CD8-positive, alpha-beta T cell (primary cell): ENCODE measurements at regions of chr12 and their contacts with region 1.

Region 1: GRCh38 chr12:112937741-112938719 is at the start of gene OAS3:
- DNase-seq: peak; percentile 20 to 92 (median 62)
- ATAC-seq: peak; percentile 67
- H3K4me3 ChIP-seq: peak within 1 kb of the TSS; percentile 68 to 81
- H3K4me3 Mint-ChIP-seq: peak within 1 kb of the TSS; percentile 87
- H3K27ac ChIP-seq: peak within 1 kb of the TSS; percentile 69 to 78
- H3K27ac Mint-ChIP-seq: peak within 1 kb of the TSS; percentile 89
- H3K4me1 ChIP-seq: peaks cover 20% of the 10 kb centered on the region
- H3K4me1 Mint-ChIP-seq: peaks cover 30% of the 10 kb centered on the region
- H3K27me3 ChIP-seq: no peaks in the 10 kb centered on the region
- H3K27me3 Mint-ChIP-seq: no peaks in the 10 kb centered on the region
- CTCF ChIP-seq: no peak
- total RNA-seq, gene OAS3: 7.7 to 8.2 TPM

Region 2: DNA sequence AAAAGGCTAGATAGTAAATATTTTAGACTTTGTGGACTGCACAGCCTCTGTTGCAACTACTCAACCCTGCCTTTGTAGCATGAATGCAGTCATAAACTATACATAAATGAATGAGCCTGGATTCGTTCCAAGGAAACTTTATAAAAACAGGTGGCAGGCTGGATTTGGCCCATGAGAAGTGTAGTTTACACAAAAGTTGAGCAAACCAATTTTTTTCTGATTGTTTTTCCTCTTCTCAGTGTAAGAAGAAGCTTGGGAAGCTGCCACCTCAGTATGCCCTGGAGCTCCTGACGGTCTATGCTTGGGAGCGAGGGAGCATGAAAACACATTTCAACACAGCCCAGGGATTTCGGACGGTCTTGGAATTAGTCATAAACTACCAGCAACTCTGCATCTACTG is 21.8 kb before region 1 on chr12:
- CTCF ChIA-PET with region 1: no interaction called
- POLR2A ChIA-PET with region 1: no interaction called
- intact Hi-C with region 1: no loop called
- DNase-seq: no peak
- ATAC-seq: no peak
- H3K4me3 ChIP-seq: no peak overlapping the region
- H3K4me3 Mint-ChIP-seq: no peak overlapping the region
- H3K27ac ChIP-seq: no peak overlapping the region
- H3K27ac Mint-ChIP-seq: no peak overlapping the region
- H3K4me1 ChIP-seq: no peaks in the 10 kb centered on the region
- H3K4me1 Mint-ChIP-seq: peaks cover 6% of the 10 kb centered on the region
- H3K27me3 ChIP-seq: no peaks in the 10 kb centered on the region
- H3K27me3 Mint-ChIP-seq: no peaks in the 10 kb centered on the region
- CTCF ChIP-seq: no peak

Region 3: GRCh38 chr12:112998987-112999767 is 61.1 kb after region 1 on chr12:
- CTCF ChIA-PET with region 1: no interaction called
- POLR2A ChIA-PET with region 1: no interaction called
- intact Hi-C with region 1: loop called in 1 of 2 experiments (anchors 5 kb)
- DNase-seq: no peak
- ATAC-seq: no peak
- H3K4me3 ChIP-seq: no peak overlapping the region
- H3K4me3 Mint-ChIP-seq: no peak overlapping the region
- H3K27ac ChIP-seq: no peak overlapping the region
- H3K27ac Mint-ChIP-seq: peak overlapping the region; percentile 49
- H3K4me1 ChIP-seq: no peaks in the 10 kb centered on the region
- H3K4me1 Mint-ChIP-seq: no peaks in the 10 kb centered on the region
- H3K27me3 ChIP-seq: no peaks in the 10 kb centered on the region
- H3K27me3 Mint-ChIP-seq: no peaks in the 10 kb centered on the region
- CTCF ChIP-seq: no peak

Region 4: GRCh38 chr12:113658006-113658655 is 720.1 kb after region 1 on chr12:
- CTCF ChIA-PET with region 1: no interaction called
- POLR2A ChIA-PET with region 1: no interaction called
- intact Hi-C with region 1: no loop called
- DNase-seq: no peak
- ATAC-seq: no peak
- H3K4me3 ChIP-seq: no peak overlapping the region
- H3K4me3 Mint-ChIP-seq: no peak overlapping the region
- H3K27ac ChIP-seq: no peak overlapping the region
- H3K27ac Mint-ChIP-seq: no peak overlapping the region
- H3K4me1 ChIP-seq: no peaks in the 10 kb centered on the region
- H3K4me1 Mint-ChIP-seq: no peaks in the 10 kb centered on the region
- H3K27me3 ChIP-seq: no peaks in the 10 kb centered on the region
- H3K27me3 Mint-ChIP-seq: peaks cover 2% of the 10 kb centered on the region
- CTCF ChIP-seq: no peak